SK-N-SH (cell line): ENCODE measurements at regions of chr2 and their contacts with region 1.

Region 1: GRCh38 chr2:218466016-218466521 is 47.1 kb downstream of the VIL1 start:
- DNase-seq: peak; percentile 32
- H3K4me3 ChIP-seq: no peak overlapping the region
- H3K27ac ChIP-seq: no peak overlapping the region
- H3K4me1 ChIP-seq: no peaks in the 10 kb centered on the region
- H3K27me3 ChIP-seq: no peaks in the 10 kb centered on the region
- CTCF ChIP-seq: peak; percentile 68
- EP300 ChIP-seq: no peak
- RAD21 ChIP-seq: peak; percentile 56

Region 2: GRCh38 chr2:218406209-218406948 is 59.7 kb before region 1 on chr2:
- CTCF ChIA-PET with region 1: interaction called, 11 read pairs
- POLR2A ChIA-PET with region 1: no interaction called
- DNase-seq: peak; percentile 97
- H3K4me3 ChIP-seq: peak overlapping the region; percentile 48 to 58
- H3K27ac ChIP-seq: peak overlapping the region; percentile 71 to 93
- H3K4me1 ChIP-seq: peaks cover 10 to 20% of the 10 kb centered on the region in 2 experiments; a peak in 2 of 4 replicates
- H3K27me3 ChIP-seq: no peaks in the 10 kb centered on the region
- CTCF ChIP-seq: peak; percentile 78
- EP300 ChIP-seq: no peak; a peak in 1 of 4 replicates
- RAD21 ChIP-seq: peak; percentile 80

Region 3: DNA sequence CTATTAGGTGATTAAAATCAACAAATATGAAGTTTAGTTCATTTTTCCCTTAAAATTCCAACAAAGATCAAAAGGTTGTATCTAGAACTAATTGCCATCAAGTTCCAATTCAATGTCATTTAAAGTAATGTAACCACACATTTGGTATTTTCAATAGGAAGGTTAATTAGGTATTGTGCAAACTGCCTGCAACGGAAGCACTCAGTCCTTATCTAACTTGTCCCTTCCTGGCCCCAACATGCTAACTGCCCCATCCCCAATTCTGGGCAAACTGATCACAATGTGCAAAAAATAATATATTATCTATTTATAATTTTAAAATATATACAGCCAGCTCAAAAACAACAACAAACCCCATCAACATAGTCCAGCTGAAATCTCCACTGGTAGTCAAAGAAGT is 14.0 kb before region 1 on chr2:
- CTCF ChIA-PET with region 1: interaction called, 21 read pairs
- POLR2A ChIA-PET with region 1: no interaction called
- DNase-seq: no peak
- H3K4me3 ChIP-seq: no peak overlapping the region
- H3K27ac ChIP-seq: no peak overlapping the region
- H3K4me1 ChIP-seq: no peaks in the 10 kb centered on the region; a peak in 1 of 4 replicates
- H3K27me3 ChIP-seq: no peaks in the 10 kb centered on the region
- CTCF ChIP-seq: no peak
- EP300 ChIP-seq: no peak
- RAD21 ChIP-seq: no peak

Region 4: GRCh38 chr2:218476676-218477075 is 10.6 kb after region 1 on chr2:
- CTCF ChIA-PET with region 1: interaction called, 15 read pairs
- POLR2A ChIA-PET with region 1: no interaction called
- DNase-seq: no peak
- H3K4me3 ChIP-seq: no peak overlapping the region
- H3K27ac ChIP-seq: peak overlapping the region in 1 of 2 experiments; percentile 58; a peak in 2 of 4 replicates
- H3K4me1 ChIP-seq: no peaks in the 10 kb centered on the region; a peak in 1 of 4 replicates
- H3K27me3 ChIP-seq: no peaks in the 10 kb centered on the region
- CTCF ChIP-seq: no peak
- EP300 ChIP-seq: no peak
- RAD21 ChIP-seq: no peak

Region 5: GRCh38 chr2:218547511-218547910 is 81.4 kb after region 1 on chr2:
- CTCF ChIA-PET with region 1: no interaction called
- POLR2A ChIA-PET with region 1: no interaction called
- DNase-seq: no peak
- H3K4me3 ChIP-seq: no peak overlapping the region
- H3K27ac ChIP-seq: no peak overlapping the region
- H3K4me1 ChIP-seq: no peaks in the 10 kb centered on the region
- H3K27me3 ChIP-seq: no peaks in the 10 kb centered on the region
- CTCF ChIP-seq: no peak
- EP300 ChIP-seq: no peak
- RAD21 ChIP-seq: no peak